ENCODE measurements at regions of chr6 and their contacts with region 1.

Region 1: GRCh38 chr6:118509009-118509617 is 39.0 kb upstream of the PLN start:
- DNase-seq: peak; percentile 60
- H3K4me3 ChIP-seq: no peak overlapping the region
- H3K27ac ChIP-seq: no peak overlapping the region
- H3K4me1 ChIP-seq: no peaks in the 10 kb centered on the region
- H3K27me3 ChIP-seq: no peaks in the 10 kb centered on the region
- CTCF ChIP-seq: peak; percentile 48 to 54
- POLR2A ChIP-seq: no peak

Region 2: GRCh38 chr6:118228886-118229285 is 280.2 kb before region 1 on chr6:
- CTCF ChIA-PET with region 1: no interaction called
- POLR2A ChIA-PET with region 1: no interaction called
- dilution Hi-C with region 1: no loop called
- intact Hi-C with region 1: no loop called
- DNase-seq: no peak
- H3K4me3 ChIP-seq: no peak overlapping the region
- H3K27ac ChIP-seq: no peak overlapping the region
- H3K4me1 ChIP-seq: no peaks in the 10 kb centered on the region
- H3K27me3 ChIP-seq: no peaks in the 10 kb centered on the region
- CTCF ChIP-seq: no peak
- POLR2A ChIP-seq: no peak

Region 3: DNA sequence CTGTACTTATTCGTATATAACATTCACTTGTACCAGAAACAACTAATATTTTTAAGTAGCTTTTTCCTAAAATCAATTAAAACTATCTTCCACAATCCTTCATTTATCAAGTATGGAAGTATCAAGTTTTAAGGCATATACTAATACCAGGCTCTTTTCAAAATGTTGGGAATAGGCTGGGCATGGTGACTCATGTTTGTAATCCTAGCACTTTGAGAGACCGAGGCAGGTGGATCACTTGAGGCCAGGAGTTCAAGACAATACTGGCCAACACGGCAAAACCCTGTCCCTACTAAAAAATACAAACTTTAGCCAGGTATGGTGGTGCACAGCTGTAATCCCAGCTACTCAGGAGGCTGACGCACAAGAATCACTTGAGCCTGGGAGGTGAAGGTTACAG is 13.3 kb after region 1 on chr6:
- CTCF ChIA-PET with region 1: interaction called, 14 read pairs
- POLR2A ChIA-PET with region 1: no interaction called
- dilution Hi-C with region 1: no loop called
- intact Hi-C with region 1: no loop called
- DNase-seq: no peak
- H3K4me3 ChIP-seq: no peak overlapping the region
- H3K27ac ChIP-seq: no peak overlapping the region
- H3K4me1 ChIP-seq: no peaks in the 10 kb centered on the region
- H3K27me3 ChIP-seq: no peaks in the 10 kb centered on the region
- CTCF ChIP-seq: no peak
- POLR2A ChIP-seq: no peak

Region 4: DNA sequence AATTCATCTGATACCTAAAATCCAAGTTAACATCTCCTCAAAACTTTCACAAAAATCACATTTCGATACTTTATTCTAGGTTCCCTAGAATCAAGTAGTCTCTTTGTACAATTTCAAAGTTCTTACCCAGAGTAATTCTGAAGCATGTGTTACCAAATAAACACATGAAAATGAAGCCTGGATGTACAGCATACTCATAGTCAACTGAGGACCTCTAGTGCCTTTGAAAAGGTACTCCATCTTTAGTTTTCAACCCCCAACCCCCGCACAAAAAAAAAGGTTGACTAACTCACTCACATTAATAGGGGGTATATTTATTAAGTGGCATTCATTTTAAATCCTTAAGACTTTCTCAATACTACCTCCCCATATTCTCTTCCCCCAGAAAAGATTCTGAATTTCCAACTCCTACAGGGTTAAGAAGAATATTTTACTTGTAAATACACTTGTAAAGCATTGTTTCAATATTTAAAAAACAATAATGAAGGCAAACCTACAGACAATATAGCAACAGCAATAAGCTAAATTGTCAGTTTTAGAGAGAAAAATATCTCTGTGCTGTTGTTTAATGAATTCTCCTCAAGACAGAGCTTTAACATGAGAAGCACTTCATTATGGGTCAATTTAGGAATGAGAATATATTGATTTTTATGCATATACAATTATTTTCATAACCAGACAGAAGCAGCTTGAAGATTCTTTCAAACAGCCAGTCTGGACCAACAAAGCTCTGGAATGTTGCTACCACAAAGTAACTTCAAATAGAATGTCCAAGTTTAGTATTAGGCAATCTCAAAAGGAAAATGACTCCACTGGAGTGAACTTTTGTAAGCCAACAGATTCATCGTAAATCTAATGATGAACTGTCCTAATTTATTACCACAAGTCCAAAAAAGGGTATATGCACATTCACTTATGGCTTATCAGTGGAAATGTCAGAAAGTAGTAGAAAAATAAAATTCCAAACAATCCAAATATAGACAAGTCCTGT is 42.2 kb after region 1 on chr6:
- CTCF ChIA-PET with region 1: interaction called, 4 read pairs
- POLR2A ChIA-PET with region 1: no interaction called
- dilution Hi-C with region 1: no loop called
- intact Hi-C with region 1: loop called (anchors 1 kb)
- DNase-seq: peak; percentile 79
- H3K4me3 ChIP-seq: no peak overlapping the region
- H3K27ac ChIP-seq: no peak overlapping the region
- H3K4me1 ChIP-seq: no peaks in the 10 kb centered on the region
- H3K27me3 ChIP-seq: no peaks in the 10 kb centered on the region
- CTCF ChIP-seq: peak; percentile 31 to 46
- POLR2A ChIP-seq: no peak

Region 5: GRCh38 chr6:118580585-118581419 is 71.7 kb after region 1 on chr6:
- CTCF ChIA-PET with region 1: interaction called, 12 read pairs
- POLR2A ChIA-PET with region 1: no interaction called
- dilution Hi-C with region 1: no loop called
- intact Hi-C with region 1: loop called (anchors 2 kb)
- DNase-seq: peak; percentile 68
- H3K4me3 ChIP-seq: no peak overlapping the region
- H3K27ac ChIP-seq: no peak overlapping the region
- H3K4me1 ChIP-seq: no peaks in the 10 kb centered on the region
- H3K27me3 ChIP-seq: no peaks in the 10 kb centered on the region
- CTCF ChIP-seq: peak; percentile 54 to 56
- POLR2A ChIP-seq: no peak

Region 6: GRCh38 chr6:118618679-118619377 is 109.7 kb after region 1 on chr6:
- CTCF ChIA-PET with region 1: no interaction called
- POLR2A ChIA-PET with region 1: no interaction called
- dilution Hi-C with region 1: no loop called
- intact Hi-C with region 1: loop called (anchors 1 kb)
- DNase-seq: peak; percentile 54
- H3K4me3 ChIP-seq: no peak overlapping the region
- H3K27ac ChIP-seq: no peak overlapping the region
- H3K4me1 ChIP-seq: no peaks in the 10 kb centered on the region
- H3K27me3 ChIP-seq: no peaks in the 10 kb centered on the region
- CTCF ChIP-seq: peak; percentile 78 to 82
- POLR2A ChIP-seq: no peak

Region 7: GRCh38 chr6:119586250-119586882 is 1077.3 kb after region 1 on chr6:
- CTCF ChIA-PET with region 1: no interaction called
- POLR2A ChIA-PET with region 1: no interaction called
- dilution Hi-C with region 1: no loop called
- intact Hi-C with region 1: no loop called
- DNase-seq: no peak
- H3K4me3 ChIP-seq: no peak overlapping the region
- H3K27ac ChIP-seq: no peak overlapping the region
- H3K4me1 ChIP-seq: no peaks in the 10 kb centered on the region
- H3K27me3 ChIP-seq: no peaks in the 10 kb centered on the region
- CTCF ChIP-seq: no peak
- POLR2A ChIP-seq: no peak